ENCODE measurements at regions of chr4 and their contacts with region 1.

Region 1: DNA sequence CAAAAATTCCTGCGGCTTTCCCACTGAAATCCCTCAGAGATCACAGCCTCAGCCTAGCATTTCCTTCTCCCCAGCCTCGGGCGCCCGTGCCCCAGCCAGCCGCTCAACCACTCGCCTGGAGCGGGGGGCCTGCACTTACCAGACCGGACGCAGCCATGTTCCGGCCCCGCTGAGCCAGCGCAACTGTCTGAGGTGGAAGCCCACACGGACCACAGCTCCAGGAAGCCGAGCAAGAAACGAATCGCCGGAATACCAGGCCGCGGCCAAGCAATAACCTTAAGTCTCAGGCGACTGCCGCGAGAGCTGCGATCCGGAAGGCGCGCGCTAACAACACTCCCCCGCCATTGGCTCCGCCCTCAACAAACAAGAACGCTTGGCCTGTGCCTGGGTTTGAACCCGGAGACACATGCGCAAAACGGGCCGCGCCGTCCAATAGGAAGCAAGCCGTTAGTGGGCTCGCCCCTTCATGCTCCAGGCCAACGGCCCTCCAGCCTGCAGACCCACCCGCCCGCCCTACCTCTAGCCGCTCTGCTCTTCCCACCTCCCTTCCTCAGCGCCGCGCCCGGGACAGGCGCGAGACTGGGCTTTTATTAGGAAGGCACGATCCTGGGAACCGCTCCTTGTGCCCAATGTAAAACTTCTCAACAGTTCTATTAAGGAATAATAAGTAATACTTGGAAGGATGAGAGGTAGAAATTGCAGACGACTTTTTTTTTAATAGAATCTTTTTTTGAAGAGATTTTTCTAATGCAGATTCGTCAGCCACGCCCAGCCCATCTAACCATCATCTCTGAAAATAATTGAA is at the start of gene CENPC:
- DNase-seq: peak; percentile 99
- ATAC-seq: peak; percentile 96
- H3K4me3 ChIP-seq: peak within 1 kb of the TSS; percentile 96
- H3K27ac ChIP-seq: peak within 1 kb of the TSS; percentile 61
- H3K4me1 ChIP-seq: peaks cover 30% of the 10 kb centered on the region
- H3K27me3 ChIP-seq: no peaks in the 10 kb centered on the region
- CTCF ChIP-seq: no peak
- total RNA-seq, gene CENPC: 8.4 and 10.6 TPM in 2 replicates

Region 2: DNA sequence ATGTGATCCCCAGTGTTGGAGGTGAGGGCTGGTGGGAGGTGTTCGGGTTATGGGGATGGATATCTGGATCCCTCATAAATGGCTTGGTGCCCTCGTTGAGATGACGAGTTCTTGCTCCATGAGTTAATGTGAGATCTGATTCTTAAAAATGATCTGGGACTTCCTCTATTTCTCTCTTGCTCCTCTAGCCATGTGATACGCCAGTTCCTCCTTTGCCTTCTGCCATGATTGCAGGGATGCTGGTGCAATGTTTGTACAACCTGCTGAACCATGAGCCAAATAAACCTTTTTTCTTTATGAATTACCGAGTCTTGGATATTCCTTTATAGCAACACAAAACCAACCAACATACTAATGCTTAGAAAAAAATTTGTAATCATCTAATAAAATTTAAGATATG is 69.7 kb after region 1 on chr4:
- CTCF ChIA-PET with region 1: no interaction called
- POLR2A ChIA-PET with region 1: no interaction called
- intact Hi-C with region 1: loop called (anchors 2 kb)
- DNase-seq: no peak
- ATAC-seq: no peak
- H3K4me3 ChIP-seq: no peak overlapping the region
- H3K27ac ChIP-seq: no peak overlapping the region
- H3K4me1 ChIP-seq: peaks cover 16% of the 10 kb centered on the region
- H3K27me3 ChIP-seq: no peaks in the 10 kb centered on the region
- CTCF ChIP-seq: no peak

Region 3: GRCh38 chr4:67700738-67701516 is 155.5 kb after region 1 on chr4 and contains the start of gene UBA6:
- CTCF ChIA-PET with region 1: no interaction called
- POLR2A ChIA-PET with region 1: no interaction called
- intact Hi-C with region 1: loop called (anchors 1 kb)
- DNase-seq: peak; percentile 99
- ATAC-seq: peak; percentile 94
- H3K4me3 ChIP-seq: peak within 1 kb of the TSS; percentile 86
- H3K27ac ChIP-seq: peak within 1 kb of the TSS; percentile 78
- H3K4me1 ChIP-seq: peaks cover 32% of the 10 kb centered on the region
- H3K27me3 ChIP-seq: no peaks in the 10 kb centered on the region
- CTCF ChIP-seq: peak; percentile 64
- total RNA-seq, gene UBA6: 94.6 and 107 TPM in 2 replicates

Region 4: DNA sequence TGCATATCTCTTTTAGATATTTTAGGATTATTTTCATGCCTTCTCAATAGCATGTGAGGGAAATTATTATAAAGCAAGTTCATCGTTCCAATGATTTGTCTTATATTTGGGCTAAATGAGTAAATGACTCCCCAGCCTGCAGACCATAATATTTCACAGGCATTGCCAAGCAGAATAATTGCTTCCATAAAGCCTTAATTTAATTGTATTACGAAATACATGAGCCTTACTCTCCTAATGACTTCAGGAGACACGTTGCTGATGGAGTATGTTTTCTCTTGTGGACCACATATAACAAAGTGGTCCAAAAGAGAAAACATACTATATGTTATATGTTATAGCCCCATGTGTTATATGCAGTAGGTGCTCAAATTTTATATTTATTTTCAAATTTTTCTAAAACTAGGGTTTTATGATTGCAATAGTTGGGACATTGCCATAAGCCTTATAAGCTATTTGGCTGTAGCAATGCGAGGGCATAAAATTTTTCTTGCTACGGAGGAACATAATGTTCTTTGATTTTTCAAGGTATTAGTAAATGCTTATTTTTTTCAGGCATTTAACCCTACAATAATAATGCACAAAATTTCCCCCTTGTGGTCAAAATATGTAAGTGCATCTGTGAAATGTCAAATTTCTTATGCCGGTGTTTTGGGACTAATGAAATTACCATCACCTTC is 364.6 kb after region 1 on chr4:
- CTCF ChIA-PET with region 1: no interaction called
- POLR2A ChIA-PET with region 1: no interaction called
- intact Hi-C with region 1: loop called (anchors 1 kb)
- DNase-seq: peak; percentile 70
- ATAC-seq: peak; percentile 53
- H3K4me3 ChIP-seq: no peak overlapping the region
- H3K27ac ChIP-seq: no peak overlapping the region
- H3K4me1 ChIP-seq: no peaks in the 10 kb centered on the region
- H3K27me3 ChIP-seq: no peaks in the 10 kb centered on the region
- CTCF ChIP-seq: peak; percentile 84

Measured in PC-3 (cell line).